Mammary epithelial cell (primary cell): ENCODE measurements at regions of chr5 and their contacts with region 1.

Region 1: GRCh38 chr5:78699565-78700241 is 51.1 kb upstream of the LHFPL2 start:
- DNase-seq: peak; percentile 100
- H3K4me3 ChIP-seq: peak overlapping the region in 1 of 3 experiments; percentile 6
- H3K27ac ChIP-seq: peak overlapping the region; percentile 97
- H3K4me1 ChIP-seq: peaks cover 32% of the 10 kb centered on the region
- H3K27me3 ChIP-seq: no peaks in the 10 kb centered on the region
- CTCF ChIP-seq: no peak

Region 2: GRCh38 chr5:78162253-78162862 is 537.3 kb before region 1 on chr5:
- CTCF ChIA-PET with region 1: no interaction called
- dilution Hi-C with region 1: no loop called
- in situ Hi-C with region 1: no loop called
- intact Hi-C with region 1: no loop called
- DNase-seq: no peak
- H3K4me3 ChIP-seq: no peak overlapping the region
- H3K27ac ChIP-seq: no peak overlapping the region
- H3K4me1 ChIP-seq: no peaks in the 10 kb centered on the region
- H3K27me3 ChIP-seq: no peaks in the 10 kb centered on the region
- CTCF ChIP-seq: peak; percentile 52 to 59

Region 3: GRCh38 chr5:78483809-78484521 is 215.7 kb before region 1 on chr5:
- CTCF ChIA-PET with region 1: no interaction called
- dilution Hi-C with region 1: no loop called
- in situ Hi-C with region 1: no loop called
- intact Hi-C with region 1: no loop called
- DNase-seq: no peak
- H3K4me3 ChIP-seq: no peak overlapping the region
- H3K27ac ChIP-seq: no peak overlapping the region
- H3K4me1 ChIP-seq: peaks cover 9% of the 10 kb centered on the region
- H3K27me3 ChIP-seq: no peaks in the 10 kb centered on the region
- CTCF ChIP-seq: no peak

Region 4: GRCh38 chr5:78594610-78595457 is 104.9 kb before region 1 on chr5:
- CTCF ChIA-PET with region 1: no interaction called
- dilution Hi-C with region 1: no loop called
- in situ Hi-C with region 1: no loop called
- intact Hi-C with region 1: loop called (anchors 5 kb)
- DNase-seq: peak; percentile 96
- H3K4me3 ChIP-seq: no peak overlapping the region
- H3K27ac ChIP-seq: peak overlapping the region; percentile 90
- H3K4me1 ChIP-seq: peaks cover 63% of the 10 kb centered on the region
- H3K27me3 ChIP-seq: no peaks in the 10 kb centered on the region
- CTCF ChIP-seq: peak in 1 of 2 donors; percentile 3

Region 5: GRCh38 chr5:78638423-78638822 is 61.3 kb before region 1 on chr5:
- CTCF ChIA-PET with region 1: no interaction called
- dilution Hi-C with region 1: loop called (anchors 5 kb)
- in situ Hi-C with region 1: no loop called
- intact Hi-C with region 1: loop called (anchors 1 kb)
- DNase-seq: peak; percentile 98
- H3K4me3 ChIP-seq: no peak overlapping the region
- H3K27ac ChIP-seq: peak overlapping the region; percentile 85
- H3K4me1 ChIP-seq: peaks cover 44% of the 10 kb centered on the region
- H3K27me3 ChIP-seq: no peaks in the 10 kb centered on the region
- CTCF ChIP-seq: no peak

Region 6: DNA sequence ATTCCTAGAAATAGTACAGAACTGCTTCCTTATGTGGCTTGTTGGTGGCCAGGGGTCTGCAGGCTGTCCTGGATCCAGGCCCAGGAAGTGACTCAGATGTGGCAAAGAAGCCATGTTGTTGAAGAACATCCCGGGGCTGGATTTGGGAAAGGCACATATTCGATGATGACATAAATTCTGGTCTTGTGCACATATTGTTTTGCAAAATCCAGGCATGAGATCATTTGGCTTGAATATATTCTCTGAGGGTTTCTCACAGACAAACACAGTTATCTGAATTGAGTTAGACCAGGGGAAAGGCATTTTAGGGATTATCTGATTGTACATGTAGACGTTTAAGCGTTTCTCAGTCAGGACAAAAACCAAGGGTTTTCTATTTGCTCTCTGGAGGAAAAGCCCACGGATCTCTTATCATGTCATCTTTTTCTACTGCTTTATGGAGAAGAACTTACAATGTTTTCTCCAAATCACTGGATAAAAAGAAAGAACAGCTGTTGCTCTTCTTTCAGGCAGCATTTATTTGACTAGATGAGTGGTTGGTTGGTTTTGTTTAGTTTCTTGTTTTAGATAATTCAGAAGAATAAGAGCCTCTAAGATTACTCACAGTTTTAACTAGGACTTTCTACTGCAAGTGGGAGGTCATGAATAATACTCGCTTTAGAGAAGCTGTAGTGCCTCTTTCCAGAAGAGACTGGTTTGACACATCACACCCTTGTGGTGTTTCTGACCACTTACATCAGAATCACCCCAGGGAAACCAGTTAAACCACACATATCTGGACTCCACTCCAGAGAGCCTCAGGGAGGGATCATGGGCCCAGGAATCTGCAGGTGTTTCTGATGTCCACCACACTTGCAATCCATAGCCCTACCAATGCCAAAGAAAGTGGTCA is 21.7 kb before region 1 on chr5:
- CTCF ChIA-PET with region 1: no interaction called
- dilution Hi-C with region 1: no loop called
- in situ Hi-C with region 1: no loop called
- intact Hi-C with region 1: loop called (anchors 1 kb)
- DNase-seq: peak; percentile 96
- H3K4me3 ChIP-seq: no peak overlapping the region
- H3K27ac ChIP-seq: peak overlapping the region; percentile 77
- H3K4me1 ChIP-seq: peaks cover 20% of the 10 kb centered on the region
- H3K27me3 ChIP-seq: no peaks in the 10 kb centered on the region
- CTCF ChIP-seq: no peak

Region 7: DNA sequence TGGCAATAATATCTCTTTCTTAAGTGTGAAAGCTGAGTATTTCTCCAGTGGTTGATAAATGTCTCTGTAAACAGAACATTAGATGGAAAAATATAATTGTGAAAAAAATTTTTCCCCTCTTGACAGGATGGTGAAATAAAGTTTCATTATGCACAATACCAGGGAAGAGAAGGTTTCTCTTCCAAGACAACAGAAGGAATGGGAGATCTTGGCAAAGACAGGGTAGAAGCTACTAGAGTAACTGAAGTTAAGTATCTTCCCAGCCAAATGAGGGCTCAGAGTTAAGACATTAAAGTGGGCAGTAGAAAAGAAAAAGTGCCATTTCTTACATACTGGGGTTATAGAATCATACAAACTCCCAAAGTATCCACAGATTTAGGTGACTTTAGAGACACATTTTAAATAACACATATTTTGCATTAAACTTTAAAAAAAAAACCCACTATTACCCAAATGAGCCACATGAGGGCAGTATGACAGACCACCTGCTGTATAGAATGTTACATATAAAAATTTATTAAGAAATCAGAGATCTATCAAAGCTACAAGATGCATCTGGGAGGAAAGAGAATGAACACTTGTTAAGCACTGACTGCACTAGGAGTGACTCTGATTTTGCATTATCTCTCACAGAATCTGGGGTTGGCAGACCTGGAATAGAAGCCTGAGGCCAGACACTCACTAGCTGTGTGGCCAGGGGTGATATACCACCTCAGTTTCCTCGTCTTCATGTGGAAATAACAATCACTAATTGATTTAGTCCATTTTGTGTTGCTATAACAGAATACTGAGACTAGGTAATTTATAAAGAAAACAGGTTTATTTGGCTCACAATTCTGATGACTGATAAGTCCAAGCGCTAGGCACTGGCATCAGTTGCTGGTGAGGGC is 186.9 kb after region 1 on chr5:
- CTCF ChIA-PET with region 1: no interaction called
- dilution Hi-C with region 1: no loop called
- in situ Hi-C with region 1: no loop called
- intact Hi-C with region 1: loop called (anchors 1 kb)
- DNase-seq: no peak
- H3K4me3 ChIP-seq: no peak overlapping the region
- H3K27ac ChIP-seq: no peak overlapping the region
- H3K4me1 ChIP-seq: peaks cover 3% of the 10 kb centered on the region
- H3K27me3 ChIP-seq: no peaks in the 10 kb centered on the region
- CTCF ChIP-seq: peak; percentile 49 to 53